CD8-positive, alpha-beta T cell (primary cell): ENCODE measurements at regions of chr2 and their contacts with region 1.

Region 1: GRCh38 chr2:12005886-12006681 is 259.7 kb downstream of the LPIN1 start:
- DNase-seq: peak; percentile 38 to 93 (median 73)
- ATAC-seq: peak; percentile 92
- H3K4me3 ChIP-seq: no peak overlapping the region
- H3K4me3 Mint-ChIP-seq: no peak overlapping the region
- H3K27ac ChIP-seq: no peak overlapping the region
- H3K27ac Mint-ChIP-seq: peak overlapping the region; percentile 46
- H3K4me1 ChIP-seq: peaks cover 18% of the 10 kb centered on the region
- H3K4me1 Mint-ChIP-seq: peaks cover 27% of the 10 kb centered on the region
- H3K27me3 ChIP-seq: peaks cover 0 to 16% of the 10 kb centered on the region in 2 experiments
- H3K27me3 Mint-ChIP-seq: peaks cover 21% of the 10 kb centered on the region
- CTCF ChIP-seq: no peak

Region 2: GRCh38 chr2:11573418-11574175 is 432.5 kb before region 1 on chr2:
- CTCF ChIA-PET with region 1: no interaction called
- POLR2A ChIA-PET with region 1: no interaction called
- intact Hi-C with region 1: no loop called
- DNase-seq: no peak
- ATAC-seq: no peak
- H3K4me3 ChIP-seq: no peak overlapping the region
- H3K4me3 Mint-ChIP-seq: no peak overlapping the region
- H3K27ac ChIP-seq: no peak overlapping the region
- H3K27ac Mint-ChIP-seq: no peak overlapping the region
- H3K4me1 ChIP-seq: no peaks in the 10 kb centered on the region
- H3K4me1 Mint-ChIP-seq: no peaks in the 10 kb centered on the region
- H3K27me3 ChIP-seq: no peaks in the 10 kb centered on the region
- H3K27me3 Mint-ChIP-seq: no peaks in the 10 kb centered on the region
- CTCF ChIP-seq: no peak

Region 3: DNA sequence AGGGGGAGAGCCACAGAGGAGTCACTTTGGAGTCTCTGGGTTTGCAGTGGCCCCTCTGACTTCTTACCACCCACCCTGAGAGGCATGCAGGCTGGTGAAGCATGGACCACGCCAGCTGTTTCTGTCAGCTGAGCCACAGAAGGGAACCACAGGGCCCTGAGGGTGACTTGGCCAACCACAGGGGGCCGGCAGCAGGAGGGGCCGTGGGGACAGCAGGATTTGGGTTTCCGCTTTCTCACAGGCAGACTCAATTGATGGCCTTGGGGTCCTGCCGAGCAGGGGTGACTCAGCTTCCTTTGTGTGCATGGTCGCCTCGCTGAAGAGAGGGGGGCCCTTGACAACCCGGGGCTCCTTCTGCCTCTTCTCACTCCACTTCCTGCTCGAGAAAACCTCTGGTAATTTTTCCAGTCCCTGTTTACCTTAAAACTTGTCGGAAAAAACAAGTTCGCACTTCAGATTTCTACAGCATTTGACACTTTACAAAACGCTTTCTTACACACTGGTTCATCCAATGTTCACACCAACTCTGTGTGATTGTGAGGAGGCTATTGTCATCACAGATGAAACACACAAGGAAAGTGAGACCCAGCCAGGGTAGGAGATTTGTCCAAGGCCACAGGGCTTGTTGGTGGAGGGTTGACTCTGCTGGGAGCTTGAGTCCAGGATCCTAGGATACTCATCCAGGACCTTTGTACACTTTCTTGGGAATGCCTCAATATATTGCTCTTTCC is 51.5 kb after region 1 on chr2:
- CTCF ChIA-PET with region 1: no interaction called
- POLR2A ChIA-PET with region 1: no interaction called
- intact Hi-C with region 1: loop called in 1 of 2 experiments (anchors 5 kb)
- DNase-seq: peak; percentile 5 to 74 (median 58)
- ATAC-seq: peak; percentile 85
- H3K4me3 ChIP-seq: no peak overlapping the region
- H3K4me3 Mint-ChIP-seq: peak overlapping the region; percentile 13
- H3K27ac ChIP-seq: no peak overlapping the region
- H3K27ac Mint-ChIP-seq: no peak overlapping the region
- H3K4me1 ChIP-seq: peaks cover 19% of the 10 kb centered on the region
- H3K4me1 Mint-ChIP-seq: peaks cover 37% of the 10 kb centered on the region
- H3K27me3 ChIP-seq: peaks cover 0 to under 1% of the 10 kb centered on the region in 2 experiments
- H3K27me3 Mint-ChIP-seq: no peaks in the 10 kb centered on the region
- CTCF ChIP-seq: no peak